ENCODE measurements at regions of chr5 and their contacts with region 1.

Region 1: GRCh38 chr5:79133657-79134451 is 22.2 kb downstream of the BHMT start:
- DNase-seq: peak; percentile 69
- H3K4me3 Mint-ChIP-seq: peak overlapping the region; percentile 36
- H3K27ac Mint-ChIP-seq: peak overlapping the region; percentile 69
- H3K4me1 Mint-ChIP-seq: peaks cover 15% of the 10 kb centered on the region
- H3K27me3 Mint-ChIP-seq: no peaks in the 10 kb centered on the region

Region 2: DNA sequence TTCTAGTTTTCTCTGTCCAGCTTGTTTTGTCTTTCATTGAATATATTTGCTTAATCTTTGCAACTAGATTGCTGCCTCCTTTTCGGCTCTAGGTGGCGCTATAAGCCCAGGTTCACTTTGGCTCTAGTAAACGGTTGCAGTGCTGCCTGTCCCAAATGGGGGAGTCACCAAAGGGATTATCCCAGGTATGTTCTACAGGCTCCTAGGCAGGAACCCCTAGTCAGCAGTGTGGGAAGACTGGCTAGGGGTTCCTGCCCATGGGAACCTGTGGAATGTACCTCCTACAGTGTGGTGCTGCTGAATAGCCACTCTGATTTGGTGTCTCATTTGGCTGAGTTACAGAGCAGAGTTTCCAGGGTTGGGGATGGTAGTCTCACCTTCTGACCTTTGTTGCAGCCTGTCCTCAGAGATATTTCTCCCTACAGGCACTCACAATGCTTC is 233.9 kb before region 1 on chr5:
- CTCF ChIA-PET with region 1: interaction called, 38 read pairs
- POLR2A ChIA-PET with region 1: no interaction called
- DNase-seq: peak; percentile 51
- H3K4me3 Mint-ChIP-seq: no peak overlapping the region
- H3K27ac Mint-ChIP-seq: no peak overlapping the region
- H3K4me1 Mint-ChIP-seq: no peaks in the 10 kb centered on the region
- H3K27me3 Mint-ChIP-seq: no peaks in the 10 kb centered on the region

Region 3: DNA sequence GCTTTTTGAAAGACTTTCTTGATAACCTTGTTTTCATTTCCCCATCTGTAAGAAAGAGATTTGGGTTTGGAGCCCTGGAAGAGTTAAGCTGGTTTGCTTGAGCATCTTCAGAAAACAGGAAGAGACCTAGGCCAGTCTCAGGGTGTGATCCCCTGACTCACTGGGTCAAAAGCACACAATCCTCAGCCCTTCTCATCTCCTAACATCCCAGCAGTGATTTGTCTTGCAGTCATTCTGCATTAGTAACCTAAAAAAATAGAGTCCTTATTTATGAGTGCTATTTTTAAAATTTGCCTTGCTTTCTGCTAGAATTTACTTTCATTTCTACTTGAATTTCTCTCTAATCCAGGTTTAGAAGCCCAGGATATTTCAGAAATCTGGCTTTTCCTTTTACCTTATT is 132.4 kb before region 1 on chr5:
- CTCF ChIA-PET with region 1: no interaction called
- POLR2A ChIA-PET with region 1: no interaction called
- DNase-seq: no peak
- H3K4me3 Mint-ChIP-seq: no peak overlapping the region
- H3K27ac Mint-ChIP-seq: no peak overlapping the region
- H3K4me1 Mint-ChIP-seq: no peaks in the 10 kb centered on the region
- H3K27me3 Mint-ChIP-seq: peaks cover 45% of the 10 kb centered on the region

Region 4: GRCh38 chr5:79107020-79107796 is 26.6 kb before region 1 on chr5:
- CTCF ChIA-PET with region 1: interaction called, 18 read pairs
- POLR2A ChIA-PET with region 1: no interaction called
- DNase-seq: no peak
- H3K4me3 Mint-ChIP-seq: no peak overlapping the region
- H3K27ac Mint-ChIP-seq: no peak overlapping the region
- H3K4me1 Mint-ChIP-seq: peaks cover 6% of the 10 kb centered on the region
- H3K27me3 Mint-ChIP-seq: peaks cover 53% of the 10 kb centered on the region

Region 5: DNA sequence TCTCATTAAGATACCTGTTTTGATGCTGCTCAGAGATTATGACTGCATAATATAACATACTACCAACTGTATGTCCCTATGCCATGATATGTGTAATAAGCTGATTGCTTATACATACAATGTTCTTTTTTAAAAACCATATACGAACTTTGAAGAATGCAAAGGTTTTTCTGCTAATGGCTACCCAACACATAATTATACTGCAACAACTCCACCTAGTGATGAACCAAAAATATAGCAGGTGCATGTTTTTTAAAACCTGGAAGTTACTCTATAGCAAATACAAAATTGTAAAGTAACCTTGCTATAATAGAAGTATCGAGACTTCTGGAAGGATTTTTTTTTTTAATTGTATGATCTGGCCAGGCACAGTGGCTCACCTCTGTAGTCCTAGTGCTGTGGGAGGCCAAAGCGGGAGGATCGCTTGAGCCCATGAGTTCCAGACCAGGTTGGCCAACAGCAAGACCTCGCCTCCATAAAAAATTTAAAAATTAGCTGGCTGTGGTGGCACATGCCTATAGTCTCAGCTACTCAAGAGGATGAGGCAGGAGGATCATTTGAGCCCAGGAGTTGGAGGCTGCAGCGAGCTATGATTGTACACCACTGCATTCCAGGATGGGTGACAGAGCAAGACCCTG is 331.0 kb after region 1 on chr5:
- CTCF ChIA-PET with region 1: interaction called, 96 read pairs
- POLR2A ChIA-PET with region 1: no interaction called
- DNase-seq: no peak
- H3K4me3 Mint-ChIP-seq: no peak overlapping the region
- H3K27ac Mint-ChIP-seq: no peak overlapping the region
- H3K4me1 Mint-ChIP-seq: no peaks in the 10 kb centered on the region
- H3K27me3 Mint-ChIP-seq: peaks cover 10% of the 10 kb centered on the region